CD4-positive, alpha-beta memory T cell (primary cell): ENCODE measurements at regions of chr10 and their contacts with region 1.

Region 1: DNA sequence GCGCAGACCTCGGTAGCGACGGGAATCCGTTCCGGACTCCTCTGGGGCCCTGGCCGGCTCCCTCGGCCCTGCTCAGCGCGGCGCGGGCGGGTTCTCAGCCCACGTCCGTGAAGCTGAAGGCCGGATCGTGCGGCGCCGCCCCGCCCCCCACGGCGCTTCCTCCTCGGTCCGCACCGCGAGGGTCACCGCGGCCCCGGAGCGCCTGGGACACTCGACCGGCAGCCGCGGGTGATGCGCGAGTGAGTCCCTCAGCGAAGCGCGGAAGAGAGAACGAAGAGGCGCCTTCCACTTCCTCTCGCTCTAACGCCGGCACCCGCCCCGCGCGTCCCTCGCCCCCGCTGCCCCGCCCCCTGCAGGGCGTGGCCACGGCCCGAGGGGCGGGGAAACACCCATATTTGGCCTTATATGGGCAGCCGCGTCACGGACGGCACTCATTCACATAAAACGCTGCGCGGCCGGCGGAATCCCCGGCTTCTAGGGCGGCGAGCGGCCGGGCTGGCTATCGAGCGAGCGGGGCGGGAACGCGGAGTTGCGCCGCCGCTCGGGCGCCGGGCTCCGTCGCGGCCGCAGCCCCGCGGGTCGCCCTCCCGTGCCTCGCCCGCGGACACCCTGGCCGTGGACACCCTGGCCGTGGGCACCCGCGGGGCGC is at the start of gene DUSP5:
- DNase-seq: peak; percentile 93 to 98 (median 96)
- H3K4me3 ChIP-seq: peak within 1 kb of the TSS; percentile 76 to 83
- H3K4me3 Mint-ChIP-seq: peak within 1 kb of the TSS; percentile 93 to 98 (median 96)
- H3K27ac ChIP-seq: peak within 1 kb of the TSS; percentile 79
- H3K27ac Mint-ChIP-seq: peak within 1 kb of the TSS; percentile 91 to 98 (median 96)
- H3K4me1 ChIP-seq: peaks cover 52% of the 10 kb centered on the region
- H3K4me1 Mint-ChIP-seq: peaks cover 45 to 68% (median 55%) of the 10 kb centered on the region in 4 donors
- H3K27me3 ChIP-seq: no peaks in the 10 kb centered on the region
- H3K27me3 Mint-ChIP-seq: no peaks in the 10 kb centered on the region
- total RNA-seq, gene DUSP5: 3.5 to 3.8 TPM

Region 2: DNA sequence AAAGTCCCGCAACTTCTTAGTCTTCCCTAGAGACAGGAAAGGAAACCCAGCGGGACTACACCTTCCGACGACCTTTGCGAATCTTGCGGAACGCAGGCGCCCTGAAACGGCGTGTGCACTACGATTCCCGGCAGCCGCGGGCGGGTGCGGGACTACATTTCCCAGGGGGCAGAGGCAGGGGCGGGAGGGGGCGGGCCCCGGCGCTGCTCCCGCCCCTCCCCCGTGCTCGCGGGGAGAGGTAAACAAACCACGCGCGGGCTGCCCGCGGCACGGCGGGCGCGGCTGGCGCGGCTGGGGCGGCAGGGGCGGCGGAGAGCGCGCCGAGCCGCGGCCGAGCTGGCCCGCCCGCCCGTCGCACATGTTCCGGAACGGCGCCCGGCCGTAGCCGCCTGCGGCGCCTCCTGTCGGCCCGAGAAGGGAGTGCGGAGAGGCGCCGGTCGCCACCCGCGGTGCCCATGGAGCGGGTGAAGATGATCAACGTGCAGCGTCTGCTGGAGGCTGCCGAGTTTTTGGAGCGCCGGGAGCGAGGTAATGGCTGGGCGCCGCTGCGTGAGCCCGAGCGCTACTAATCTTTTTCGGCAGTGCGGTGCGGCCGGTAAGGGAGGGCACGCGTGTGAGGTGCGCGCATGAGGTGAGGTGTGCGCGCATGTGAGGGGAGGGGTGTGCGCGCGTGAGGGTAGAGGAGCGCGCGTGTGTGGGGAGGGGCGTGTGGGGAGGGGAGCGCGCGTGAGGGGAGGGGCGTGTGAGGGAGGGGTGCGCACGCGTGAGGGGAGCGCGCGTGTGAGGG is 271.6 kb before region 1 on chr10:
- CTCF ChIA-PET with region 1: no interaction called
- POLR2A ChIA-PET with region 1: no interaction called
- intact Hi-C with region 1: loop called (anchors 2 kb)
- DNase-seq: peak; percentile 88 to 90 (median 89)
- H3K4me3 ChIP-seq: peak overlapping the region; percentile 39 to 82
- H3K4me3 Mint-ChIP-seq: peak overlapping the region; percentile 92 to 96 (median 94)
- H3K27ac ChIP-seq: peak overlapping the region; percentile 67
- H3K27ac Mint-ChIP-seq: peak overlapping the region; percentile 91 to 96 (median 96)
- H3K4me1 ChIP-seq: peaks cover 29% of the 10 kb centered on the region
- H3K4me1 Mint-ChIP-seq: peaks cover 27 to 62% (median 42%) of the 10 kb centered on the region in 4 donors
- H3K27me3 ChIP-seq: no peaks in the 10 kb centered on the region
- H3K27me3 Mint-ChIP-seq: no peaks in the 10 kb centered on the region

Region 3: GRCh38 chr10:110376021-110376766 is 121.4 kb before region 1 on chr10:
- CTCF ChIA-PET with region 1: no interaction called
- POLR2A ChIA-PET with region 1: no interaction called
- intact Hi-C with region 1: no loop called
- DNase-seq: no peak
- H3K4me3 ChIP-seq: no peak overlapping the region
- H3K4me3 Mint-ChIP-seq: no peak overlapping the region
- H3K27ac ChIP-seq: no peak overlapping the region
- H3K27ac Mint-ChIP-seq: peak overlapping the region in 1 of 7 donors; percentile 77
- H3K4me1 ChIP-seq: no peaks in the 10 kb centered on the region
- H3K4me1 Mint-ChIP-seq: no peaks in the 10 kb centered on the region
- H3K27me3 ChIP-seq: no peaks in the 10 kb centered on the region
- H3K27me3 Mint-ChIP-seq: peaks cover 3 to 4% of the 10 kb centered on the region in 2 donors

Region 4: DNA sequence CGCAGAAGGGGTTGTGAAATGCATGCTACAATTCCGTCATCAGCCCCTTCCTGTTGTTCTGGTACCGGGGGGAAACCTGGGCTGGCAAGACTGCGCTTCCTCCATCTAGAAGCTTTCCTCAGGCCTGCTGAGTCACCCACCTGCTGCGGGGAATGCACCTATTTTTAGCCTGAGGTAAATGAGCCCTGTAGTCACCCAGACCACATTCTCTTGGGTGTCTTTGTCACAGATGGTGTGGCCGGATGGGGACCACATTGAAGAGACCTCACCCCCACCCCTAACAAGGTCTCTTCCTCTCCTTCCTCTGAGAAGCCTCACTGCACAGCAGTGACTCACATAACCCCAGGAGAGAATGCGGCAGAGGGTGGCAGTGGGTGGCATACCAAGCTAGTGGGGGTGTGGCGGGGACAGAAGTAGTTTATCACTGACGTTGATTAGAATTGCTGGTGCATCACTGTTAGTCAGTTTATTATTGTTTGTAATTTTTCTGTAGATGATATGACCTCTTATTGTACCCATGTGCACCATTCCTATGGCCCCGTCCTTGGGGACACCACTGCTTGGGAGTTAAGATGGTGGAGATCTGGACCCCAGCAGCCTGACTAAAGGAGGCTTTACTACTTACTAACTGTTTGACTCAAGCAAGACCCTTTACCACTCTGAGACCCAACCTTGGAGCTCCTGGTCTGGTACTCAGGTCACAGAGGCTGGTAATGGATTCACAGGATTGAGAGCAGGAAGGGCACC is 82.8 kb before region 1 on chr10:
- CTCF ChIA-PET with region 1: interaction called, 3 read pairs
- POLR2A ChIA-PET with region 1: interaction called, 14 read pairs
- intact Hi-C with region 1: loop called (anchors 1 kb)
- DNase-seq: peak; percentile 88 to 99 (median 94)
- H3K4me3 ChIP-seq: peak overlapping the region in 1 of 2 donors; percentile 5
- H3K4me3 Mint-ChIP-seq: peak overlapping the region; percentile 22 to 71 (median 62)
- H3K27ac ChIP-seq: peak overlapping the region; percentile 62
- H3K27ac Mint-ChIP-seq: peak overlapping the region; percentile 89 to 98 (median 93)
- H3K4me1 ChIP-seq: peaks cover 43% of the 10 kb centered on the region
- H3K4me1 Mint-ChIP-seq: peaks cover 25 to 60% (median 33%) of the 10 kb centered on the region in 4 donors
- H3K27me3 ChIP-seq: no peaks in the 10 kb centered on the region
- H3K27me3 Mint-ChIP-seq: no peaks in the 10 kb centered on the region

Region 5: GRCh38 chr10:110522365-110522988 is 24.9 kb after region 1 on chr10:
- CTCF ChIA-PET with region 1: no interaction called
- POLR2A ChIA-PET with region 1: interaction called, 13 read pairs
- intact Hi-C with region 1: no loop called
- DNase-seq: no peak
- H3K4me3 ChIP-seq: no peak overlapping the region
- H3K4me3 Mint-ChIP-seq: no peak overlapping the region
- H3K27ac ChIP-seq: no peak overlapping the region
- H3K27ac Mint-ChIP-seq: peak overlapping the region in 6 of 7 donors; percentile 1 to 83 (median 28)
- H3K4me1 ChIP-seq: peaks cover 11% of the 10 kb centered on the region
- H3K4me1 Mint-ChIP-seq: peaks cover 15 to 24% (median 17%) of the 10 kb centered on the region in 4 donors
- H3K27me3 ChIP-seq: no peaks in the 10 kb centered on the region
- H3K27me3 Mint-ChIP-seq: no peaks in the 10 kb centered on the region

Region 6: DNA sequence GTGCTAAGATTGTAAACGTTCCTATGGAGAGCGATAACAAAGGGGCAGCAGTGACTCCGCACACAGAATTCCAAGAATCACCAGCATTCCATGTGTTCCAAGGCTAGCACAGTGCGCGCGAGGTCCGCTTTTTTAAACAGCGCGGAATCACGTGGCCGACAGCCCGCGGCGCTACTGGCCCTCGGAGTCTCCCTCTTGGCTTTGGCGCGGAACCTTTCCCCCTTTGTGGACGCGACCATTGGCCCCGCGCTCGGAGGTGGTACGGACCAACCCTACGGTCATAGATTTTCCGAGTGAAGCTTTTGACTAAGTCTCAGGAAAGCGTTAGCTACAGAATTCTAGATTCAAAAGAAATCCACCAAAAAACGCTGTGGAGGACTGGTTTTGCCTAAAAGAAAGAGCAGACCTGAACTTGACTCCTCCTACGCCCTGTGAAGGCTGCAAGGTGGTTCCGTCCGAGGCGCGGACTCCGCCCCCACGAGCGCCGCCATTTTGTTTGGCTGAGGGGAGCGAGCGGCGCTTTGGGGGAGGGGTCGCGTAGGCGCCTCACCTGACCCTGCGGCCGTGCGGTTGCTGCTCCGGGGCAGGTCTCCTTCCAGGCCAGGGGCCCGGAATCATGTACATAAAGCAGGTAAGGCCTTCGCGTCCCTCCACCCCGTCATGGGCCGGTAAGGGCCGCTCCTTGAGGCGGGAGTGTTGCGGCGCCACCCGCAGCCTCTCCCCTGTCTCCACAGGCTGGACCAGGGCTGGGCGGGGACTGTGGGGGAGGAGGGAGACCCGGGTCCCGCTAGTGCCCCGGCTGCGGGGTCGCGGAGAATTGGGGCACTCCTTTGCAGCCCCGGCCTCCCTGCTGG is 69.9 kb after region 1 on chr10 and contains the start of gene SMC3:
- CTCF ChIA-PET with region 1: interaction called, 5 read pairs
- POLR2A ChIA-PET with region 1: interaction called, 5 read pairs
- intact Hi-C with region 1: loop called (anchors 2 kb)
- DNase-seq: peak; percentile 91 to 96 (median 93)
- H3K4me3 ChIP-seq: peak within 1 kb of the TSS; percentile 72 to 93
- H3K4me3 Mint-ChIP-seq: peak within 1 kb of the TSS; percentile 91 to 97 (median 96)
- H3K27ac ChIP-seq: peak within 1 kb of the TSS; percentile 90
- H3K27ac Mint-ChIP-seq: peak within 1 kb of the TSS; percentile 95 to 99 (median 98)
- H3K4me1 ChIP-seq: peaks cover 45% of the 10 kb centered on the region
- H3K4me1 Mint-ChIP-seq: peaks cover 26 to 51% (median 36%) of the 10 kb centered on the region in 4 donors
- H3K27me3 ChIP-seq: no peaks in the 10 kb centered on the region
- H3K27me3 Mint-ChIP-seq: peaks cover 1 to 12% of the 10 kb centered on the region in 2 donors
- total RNA-seq, gene SMC3: 53.4 to 59.5 TPM

Region 7: DNA sequence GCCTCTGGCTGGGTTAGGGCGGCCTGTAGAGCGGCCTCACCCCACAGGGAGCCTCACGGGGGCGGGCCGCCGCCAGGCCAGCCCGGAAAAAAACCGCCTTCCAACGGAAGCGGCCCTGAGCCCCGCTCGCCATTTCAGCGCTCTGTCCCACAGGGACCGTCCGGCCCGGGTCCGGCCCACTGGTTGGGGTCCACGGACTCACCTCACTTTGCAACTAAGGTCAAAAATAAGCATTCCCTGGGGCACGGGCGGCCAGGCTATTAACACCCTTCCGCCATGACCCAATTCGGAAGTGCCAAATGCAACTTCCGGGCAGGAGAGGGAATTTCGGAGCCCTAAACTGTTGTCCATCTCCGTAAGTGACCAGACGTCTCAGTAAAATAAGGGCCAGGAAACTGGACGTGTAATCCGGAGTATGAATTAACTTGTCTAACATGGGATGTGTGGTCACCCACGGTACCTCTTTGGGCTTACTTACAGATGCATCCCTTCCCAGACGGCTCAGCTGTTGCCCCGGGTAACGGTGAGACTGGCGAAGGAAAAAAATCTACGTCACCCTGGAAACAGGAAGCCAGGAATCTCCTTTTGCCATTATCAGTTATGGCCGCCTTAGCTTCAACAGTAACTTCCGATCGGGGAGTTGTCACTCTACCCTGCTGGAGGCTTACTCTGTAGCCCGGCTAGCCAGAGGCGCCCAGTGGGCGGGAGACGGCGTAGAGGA is 421.2 kb after region 1 on chr10 and contains the start of gene BBIP1:
- CTCF ChIA-PET with region 1: no interaction called
- POLR2A ChIA-PET with region 1: interaction called, 5 read pairs
- intact Hi-C with region 1: loop called (anchors 2 kb)
- DNase-seq: peak in 1 of 5 donors; percentile 96
- H3K4me3 ChIP-seq: peak within 1 kb of the TSS; percentile 85 to 99
- H3K4me3 Mint-ChIP-seq: peak within 1 kb of the TSS; percentile 92 to 99 (median 98)
- H3K27ac ChIP-seq: peak within 1 kb of the TSS; percentile 99
- H3K27ac Mint-ChIP-seq: peak within 1 kb of the TSS; percentile 98 to 100 (median 100)
- H3K4me1 ChIP-seq: peaks cover 43% of the 10 kb centered on the region
- H3K4me1 Mint-ChIP-seq: peaks cover 27 to 64% (median 35%) of the 10 kb centered on the region in 4 donors
- H3K27me3 ChIP-seq: no peaks in the 10 kb centered on the region
- H3K27me3 Mint-ChIP-seq: no peaks in the 10 kb centered on the region
- total RNA-seq, gene BBIP1: 42.9 to 46.8 TPM